Mammary epithelial cell (primary cell): ENCODE measurements at regions of chr9 and their contacts with region 1.

Region 1: DNA sequence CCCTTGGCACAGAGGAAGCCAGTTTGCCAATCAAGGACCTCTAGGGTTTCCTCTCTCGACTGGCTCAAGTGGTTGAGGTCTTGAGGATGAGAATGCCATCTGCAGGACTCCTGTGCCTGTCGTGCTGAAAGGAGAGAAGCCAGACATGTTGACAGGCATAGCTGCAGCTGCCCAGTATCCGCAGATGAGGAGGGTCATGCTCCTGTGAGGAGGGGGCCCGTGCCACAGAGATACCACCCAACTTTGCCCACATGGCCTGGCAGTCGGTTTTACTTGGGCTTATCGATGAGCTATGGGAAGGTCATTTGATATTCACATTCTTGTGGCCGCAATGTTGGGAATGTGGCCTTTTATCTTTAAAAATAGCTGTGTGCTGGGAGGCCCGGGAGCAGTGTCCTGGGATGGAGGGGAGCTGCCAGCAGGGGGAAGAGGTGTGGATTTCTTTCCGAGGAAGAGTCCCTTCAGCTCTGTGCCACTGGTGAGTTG is 17.4 kb downstream of the FRMPD1 start:
- DNase-seq: no peak
- H3K4me3 ChIP-seq: no peak overlapping the region
- H3K27ac ChIP-seq: no peak overlapping the region
- H3K4me1 ChIP-seq: no peaks in the 10 kb centered on the region
- H3K27me3 ChIP-seq: peaks cover 6% of the 10 kb centered on the region
- CTCF ChIP-seq: peak in 1 of 2 donors; percentile 6

Region 2: GRCh38 chr9:37729499-37729898 is 61.3 kb after region 1 on chr9:
- CTCF ChIA-PET with region 1: no interaction called
- dilution Hi-C with region 1: loop called (anchors 10 kb)
- in situ Hi-C with region 1: no loop called
- intact Hi-C with region 1: no loop called
- DNase-seq: peak; percentile 81
- H3K4me3 ChIP-seq: peak overlapping the region in 1 of 3 experiments; percentile 23
- H3K27ac ChIP-seq: no peak overlapping the region
- H3K4me1 ChIP-seq: peaks cover 20% of the 10 kb centered on the region
- H3K27me3 ChIP-seq: no peaks in the 10 kb centered on the region
- CTCF ChIP-seq: no peak